ENCODE measurements at regions of chr21 and their contacts with region 1.

Region 1: GRCh38 chr21:17679002-17679600 is 66.4 kb upstream of the BTG3 start:
- DNase-seq: no peak
- ATAC-seq: peak; percentile 76

Region 2: GRCh38 chr21:17903029-17903806 is 224.1 kb after region 1 on chr21:
- intact Hi-C with region 1: loop called (anchors 2 kb)
- DNase-seq: no peak
- ATAC-seq: peak; percentile 42

Measured in left ventricle myocardium superior (tissue), 1 donor.